Colonic mucosa (tissue), 4 donors: ENCODE measurements at regions of chr9 and their contacts with region 1.

Region 1: DNA sequence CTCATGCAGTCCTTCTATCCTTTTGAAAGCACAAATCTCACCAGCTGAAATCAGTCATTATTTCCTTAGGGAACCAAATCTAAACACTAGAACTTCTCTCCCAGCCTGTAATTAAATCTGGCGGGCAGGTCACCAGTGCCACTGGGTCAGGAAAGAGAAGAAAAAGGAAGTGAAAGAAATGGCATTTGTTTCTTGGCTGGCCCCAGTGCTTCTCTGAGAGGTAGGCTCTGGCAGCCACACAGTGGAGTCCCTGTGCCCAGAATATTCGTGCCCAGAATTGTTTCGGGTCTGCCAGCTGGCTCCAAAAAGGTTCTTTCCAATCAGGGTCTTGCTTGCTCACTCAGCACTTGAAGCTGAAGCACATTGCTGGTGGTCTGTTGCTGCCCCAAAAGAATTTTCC is 133.9 kb upstream of the MTAP start:
- DNase-seq: no peak
- H3K4me3 ChIP-seq: no peak overlapping the region
- H3K27ac ChIP-seq: no peak overlapping the region
- H3K4me1 ChIP-seq: no peaks in the 10 kb centered on the region
- H3K27me3 ChIP-seq: no peaks in the 10 kb centered on the region
- CTCF ChIP-seq: no peak

Region 2: DNA sequence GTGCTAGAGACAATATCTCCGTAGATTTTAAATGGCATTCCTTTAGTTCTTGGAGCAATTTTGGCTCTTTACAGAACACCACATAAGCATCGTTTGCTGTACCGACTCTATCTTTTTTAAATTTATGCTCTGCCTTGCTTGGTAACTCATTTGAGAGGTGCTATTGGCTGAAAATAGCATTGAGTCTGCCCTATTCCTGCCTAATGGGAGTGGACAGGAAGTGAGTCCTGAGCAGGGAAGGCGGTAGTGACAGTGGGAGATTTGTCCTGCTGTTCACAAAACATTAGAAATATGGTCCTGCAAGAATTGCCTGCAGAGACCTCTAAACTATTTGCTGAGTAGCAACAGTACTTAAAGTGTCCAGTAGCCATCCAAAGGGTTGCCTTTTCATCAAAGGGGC is 71.2 kb before region 1 on chr9:
- intact Hi-C with region 1: no loop called
- DNase-seq: no peak
- H3K4me3 ChIP-seq: no peak overlapping the region
- H3K27ac ChIP-seq: no peak overlapping the region
- H3K4me1 ChIP-seq: no peaks in the 10 kb centered on the region
- H3K27me3 ChIP-seq: no peaks in the 10 kb centered on the region
- CTCF ChIP-seq: no peak

Region 3: DNA sequence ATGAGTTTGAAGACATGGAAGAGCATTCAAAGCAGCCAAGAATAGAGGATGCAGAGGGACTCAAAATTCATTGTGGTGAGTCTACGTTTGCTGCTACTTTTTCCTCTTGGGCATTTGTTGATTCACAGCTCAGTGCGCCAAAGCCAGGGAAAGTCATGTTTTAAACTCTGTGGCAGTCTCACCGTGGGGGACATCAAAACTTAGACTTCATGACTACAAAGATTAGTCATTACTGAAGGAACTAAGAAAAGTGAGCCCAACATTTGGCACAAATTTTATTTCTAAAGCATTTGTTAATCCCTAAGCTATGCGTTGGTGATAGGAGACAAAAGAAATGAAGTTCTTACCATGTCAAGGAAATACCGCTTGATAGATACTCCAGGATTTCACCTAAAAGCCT is 60.3 kb after region 1 on chr9:
- intact Hi-C with region 1: loop called (anchors 10 kb)
- DNase-seq: no peak
- H3K4me3 ChIP-seq: no peak overlapping the region
- H3K27ac ChIP-seq: no peak overlapping the region
- H3K4me1 ChIP-seq: no peaks in the 10 kb centered on the region
- H3K27me3 ChIP-seq: no peaks in the 10 kb centered on the region
- CTCF ChIP-seq: no peak